ENCODE measurements at regions of chr11 and their contacts with region 1.

Region 1: GRCh38 chr11:65593518-65594298 is 1.9 kb downstream of the KCNK7 start:
- DNase-seq: peak; percentile 73
- ATAC-seq: peak; percentile 24
- H3K4me3 Mint-ChIP-seq: no peak overlapping the region
- H3K27ac Mint-ChIP-seq: no peak overlapping the region
- H3K4me1 Mint-ChIP-seq: peaks cover 29% of the 10 kb centered on the region
- H3K27me3 Mint-ChIP-seq: no peaks in the 10 kb centered on the region
- CTCF ChIP-seq: peak; percentile 80

Region 2: DNA sequence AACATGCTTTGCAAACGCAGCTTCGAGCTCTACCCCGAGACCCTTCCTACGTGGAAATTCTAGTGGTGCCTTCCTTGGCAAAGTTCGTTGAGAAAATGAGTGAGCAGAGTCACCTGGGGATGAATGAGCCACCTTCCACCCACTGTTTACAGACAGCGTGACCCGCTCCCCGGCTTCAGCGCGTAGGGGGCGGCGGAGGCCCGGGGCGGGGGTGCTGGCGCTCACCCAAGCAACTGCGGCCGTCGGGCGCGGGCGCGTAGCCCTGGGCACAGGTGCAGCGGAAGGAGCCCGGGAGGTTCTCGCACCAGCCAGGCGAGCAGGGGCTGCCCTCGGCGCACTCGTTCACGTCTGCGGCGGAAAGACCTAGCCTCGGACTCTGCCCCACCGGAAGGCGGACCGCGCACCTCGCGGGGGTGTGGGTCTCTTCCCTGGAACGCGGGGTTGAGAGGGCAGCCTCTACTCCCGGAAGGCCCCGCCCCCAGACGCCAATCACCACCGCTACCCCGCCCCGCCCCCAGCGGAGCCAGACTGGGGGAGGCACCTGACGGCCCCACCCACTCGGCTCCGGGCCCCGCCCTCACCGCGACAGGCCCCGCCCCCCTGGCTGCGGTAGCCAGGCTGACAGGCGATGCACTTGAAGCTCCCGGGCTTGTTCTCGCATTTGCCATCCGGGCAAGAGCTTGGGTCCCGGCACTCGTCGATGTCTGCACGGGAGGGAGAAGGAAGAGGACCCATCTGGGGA is 47.3 kb before region 1 on chr11:
- CTCF ChIA-PET with region 1: interaction called, 54 read pairs
- POLR2A ChIA-PET with region 1: interaction called, 13 read pairs
- intact Hi-C with region 1: no loop called
- DNase-seq: peak; percentile 98
- ATAC-seq: peak; percentile 90
- H3K4me3 Mint-ChIP-seq: peak overlapping the region; percentile 71
- H3K27ac Mint-ChIP-seq: peak overlapping the region; percentile 84
- H3K4me1 Mint-ChIP-seq: peaks cover 52% of the 10 kb centered on the region
- H3K27me3 Mint-ChIP-seq: no peaks in the 10 kb centered on the region
- CTCF ChIP-seq: no peak

Region 3: GRCh38 chr11:65575568-65576231 is 18.0 kb before region 1 on chr11 and contains the start of gene EHBP1L1:
- CTCF ChIA-PET with region 1: interaction called, 84 read pairs
- POLR2A ChIA-PET with region 1: interaction called, 87 read pairs
- intact Hi-C with region 1: loop called (anchors 2 kb)
- DNase-seq: peak; percentile 88
- ATAC-seq: peak; percentile 27
- H3K4me3 Mint-ChIP-seq: peak within 1 kb of the TSS; percentile 90
- H3K27ac Mint-ChIP-seq: peak within 1 kb of the TSS; percentile 91
- H3K4me1 Mint-ChIP-seq: peaks cover 56% of the 10 kb centered on the region
- H3K27me3 Mint-ChIP-seq: no peaks in the 10 kb centered on the region
- CTCF ChIP-seq: no peak
- total RNA-seq, gene EHBP1L1: 94.0 to 99.4 TPM

Region 4: GRCh38 chr11:65606876-65607613 is 13.3 kb after region 1 on chr11:
- CTCF ChIA-PET with region 1: interaction called, 47 read pairs
- POLR2A ChIA-PET with region 1: interaction called, 30 read pairs
- intact Hi-C with region 1: loop called (anchors 2 kb)
- DNase-seq: no peak
- ATAC-seq: peak; percentile 67
- H3K4me3 Mint-ChIP-seq: no peak overlapping the region
- H3K27ac Mint-ChIP-seq: no peak overlapping the region
- H3K4me1 Mint-ChIP-seq: peaks cover 27% of the 10 kb centered on the region
- H3K27me3 Mint-ChIP-seq: no peaks in the 10 kb centered on the region
- CTCF ChIP-seq: no peak